ENCODE measurements at regions of chr12 and their contacts with region 1.

Region 1: GRCh38 chr12:103965590-103966504 is at the start of gene TDG:
- DNase-seq: peak; percentile 96
- H3K4me3 ChIP-seq: peak within 1 kb of the TSS; percentile 76 to 83
- H3K27ac ChIP-seq: peak within 1 kb of the TSS; percentile 88 to 90
- H3K4me1 ChIP-seq: peaks cover 4% of the 10 kb centered on the region
- H3K27me3 ChIP-seq: no peaks in the 10 kb centered on the region
- CTCF ChIP-seq: peak in 2 of 4 experiments; percentile 33 to 36
- POLR2A ChIP-seq: peak; percentile 84
- total RNA-seq, gene TDG: 11.6 to 12.1 TPM

Region 2: GRCh38 chr12:103884316-103884715 is 81.5 kb before region 1 on chr12:
- intact Hi-C with region 1: no loop called
- DNase-seq: no peak
- H3K4me3 ChIP-seq: no peak overlapping the region
- H3K27ac ChIP-seq: no peak overlapping the region
- H3K4me1 ChIP-seq: no peaks in the 10 kb centered on the region
- H3K27me3 ChIP-seq: no peaks in the 10 kb centered on the region
- CTCF ChIP-seq: peak in 3 of 4 experiments; percentile 37 to 59 (median 39)
- POLR2A ChIP-seq: no peak

Region 3: GRCh38 chr12:104064031-104064822 is 98.4 kb after region 1 on chr12 and contains the start of gene HCFC2:
- intact Hi-C with region 1: loop called (anchors 5 kb)
- DNase-seq: peak; percentile 87
- H3K4me3 ChIP-seq: peak within 1 kb of the TSS; percentile 82 to 97
- H3K27ac ChIP-seq: peak within 1 kb of the TSS; percentile 79 to 84
- H3K4me1 ChIP-seq: no peaks in the 10 kb centered on the region
- H3K27me3 ChIP-seq: no peaks in the 10 kb centered on the region
- CTCF ChIP-seq: no peak
- POLR2A ChIP-seq: peak; percentile 59
- total RNA-seq, gene HCFC2: 18.3 to 18.6 TPM

Region 4: DNA sequence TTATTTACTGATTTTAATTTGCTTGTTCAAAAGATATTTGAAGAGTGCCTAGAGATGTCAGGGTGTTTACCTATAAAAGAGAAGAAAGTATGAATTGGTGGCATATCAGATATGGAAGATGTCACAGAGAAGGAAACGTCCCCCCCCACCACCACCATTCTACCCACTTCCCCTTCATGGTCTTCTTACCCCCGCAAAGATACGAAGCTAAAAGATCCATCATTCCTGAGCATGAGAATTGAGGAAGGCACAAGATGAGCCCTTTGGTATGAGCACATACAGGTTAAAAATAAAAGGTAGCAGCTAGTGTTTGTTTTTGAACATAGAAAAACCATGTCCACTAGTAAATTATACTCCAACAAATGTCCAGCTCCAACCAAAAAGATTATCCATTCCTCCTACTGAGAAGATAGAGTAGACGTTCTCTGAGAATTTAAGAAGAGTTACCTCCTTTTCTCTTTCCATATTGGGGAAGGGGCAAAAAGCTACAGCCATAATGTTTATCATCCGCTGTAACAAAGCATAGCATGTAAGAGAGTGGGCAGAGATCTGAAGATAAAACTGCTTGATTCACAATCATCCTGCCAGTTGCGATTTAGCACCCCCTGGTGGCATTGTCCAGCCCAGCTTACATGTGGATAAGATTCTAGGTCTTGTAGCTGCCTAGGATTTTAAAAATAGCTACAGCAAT is 143.1 kb after region 1 on chr12:
- intact Hi-C with region 1: loop called (anchors 10 kb)
- DNase-seq: peak; percentile 74
- H3K4me3 ChIP-seq: no peak overlapping the region
- H3K27ac ChIP-seq: no peak overlapping the region
- H3K4me1 ChIP-seq: no peaks in the 10 kb centered on the region
- H3K27me3 ChIP-seq: no peaks in the 10 kb centered on the region
- CTCF ChIP-seq: peak; percentile 73 to 80 (median 79)
- POLR2A ChIP-seq: no peak

Measured in prostate gland (tissue), 2 donors.